T-cell (primary cell): ENCODE measurements at regions of chr7 and their contacts with region 1.

Region 1: GRCh38 chr7:69192134-69192533 is 406.1 kb upstream of the AUTS2 start:
- DNase-seq: no peak
- ATAC-seq: no peak
- H3K4me3 ChIP-seq: no peak overlapping the region
- H3K4me3 Mint-ChIP-seq: no peak overlapping the region
- H3K27ac ChIP-seq: no peak overlapping the region
- H3K27ac Mint-ChIP-seq: no peak overlapping the region
- H3K4me1 ChIP-seq: no peaks in the 10 kb centered on the region
- H3K4me1 Mint-ChIP-seq: peaks cover 0 to 12% (median 0%) of the 10 kb centered on the region in 3 donors
- H3K27me3 ChIP-seq: no peaks in the 10 kb centered on the region
- H3K27me3 Mint-ChIP-seq: no peaks in the 10 kb centered on the region

Region 2: DNA sequence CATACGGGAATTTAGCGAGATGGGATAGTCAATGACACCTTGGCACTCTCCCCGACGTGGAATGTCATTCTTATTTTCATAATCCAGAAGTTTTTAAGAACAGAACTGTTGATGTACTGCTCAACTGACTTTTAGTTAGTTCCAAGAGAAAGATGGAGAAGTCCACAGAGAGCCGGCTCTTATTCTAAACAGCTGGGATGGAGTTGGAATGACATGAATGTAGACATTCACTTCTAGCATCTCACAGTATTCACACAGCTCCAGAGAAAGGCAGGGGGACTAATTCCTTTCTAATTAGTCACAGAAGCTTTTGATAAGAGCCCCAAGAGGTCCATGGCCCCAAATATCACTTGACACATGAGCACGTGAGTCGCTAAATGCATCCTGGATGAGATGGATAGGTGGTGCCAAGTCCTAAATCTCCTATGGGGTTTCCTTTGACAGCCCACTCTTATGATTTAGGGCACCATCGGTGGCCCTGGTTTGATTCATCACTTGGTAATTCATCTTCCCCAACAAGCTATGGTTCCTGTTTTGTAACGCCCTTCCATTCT is 14.1 kb before region 1 on chr7:
- CTCF ChIA-PET with region 1: interaction called in 1 of 2 experiments, 3 read pairs
- POLR2A ChIA-PET with region 1: interaction called in 1 of 2 experiments, 10 read pairs
- DNase-seq: no peak
- ATAC-seq: no peak
- H3K4me3 ChIP-seq: no peak overlapping the region
- H3K4me3 Mint-ChIP-seq: no peak overlapping the region
- H3K27ac ChIP-seq: no peak overlapping the region
- H3K27ac Mint-ChIP-seq: no peak overlapping the region
- H3K4me1 ChIP-seq: peaks cover 0 to 5% of the 10 kb centered on the region in 2 experiments
- H3K4me1 Mint-ChIP-seq: peaks cover 6 to 15% (median 9%) of the 10 kb centered on the region in 3 donors
- H3K27me3 ChIP-seq: no peaks in the 10 kb centered on the region
- H3K27me3 Mint-ChIP-seq: no peaks in the 10 kb centered on the region

Region 3: DNA sequence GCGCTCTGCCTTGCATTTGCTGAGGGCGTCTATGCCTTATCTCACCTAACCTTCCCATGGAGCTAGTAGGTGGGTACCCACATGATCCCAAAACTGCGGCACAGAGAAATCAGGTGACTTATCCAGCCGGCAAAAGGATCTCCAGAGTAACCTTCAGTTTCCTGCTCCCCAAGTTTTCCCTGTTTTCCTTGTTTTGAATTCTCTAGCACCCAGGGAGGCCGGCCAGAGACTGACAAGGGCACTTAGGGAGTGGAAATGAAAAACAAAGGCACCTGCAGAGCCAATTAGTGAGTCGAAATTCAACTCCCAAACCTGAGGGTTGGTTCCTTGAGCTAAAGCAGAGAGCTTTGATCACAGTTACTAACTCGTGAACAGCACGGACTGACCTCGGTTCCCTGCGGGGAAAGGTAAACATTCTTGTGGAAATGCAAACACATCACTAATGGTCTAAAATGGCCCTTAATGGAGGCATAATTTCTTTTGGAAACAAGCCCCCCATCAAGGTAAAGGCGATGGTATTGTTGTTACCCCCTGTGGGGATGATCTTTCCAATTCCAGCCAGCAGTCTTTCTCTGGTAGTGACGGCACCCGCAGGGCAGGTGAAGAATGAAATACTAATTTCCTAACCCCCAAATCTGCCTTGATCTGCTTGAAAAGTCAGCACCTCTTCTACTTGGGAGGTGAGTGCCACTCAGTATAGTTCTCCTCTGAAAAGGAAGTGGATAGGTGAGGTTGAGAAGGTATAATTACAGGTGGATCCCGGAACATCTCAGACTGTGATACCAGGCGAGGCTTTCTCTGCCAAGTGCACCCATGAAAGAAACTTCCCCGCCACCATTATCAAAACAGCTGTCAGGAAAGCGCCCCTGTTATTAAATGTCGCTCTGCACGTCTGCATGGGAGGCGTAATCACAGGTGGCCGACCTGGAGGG is 40.6 kb after region 1 on chr7:
- CTCF ChIA-PET with region 1: no interaction called
- POLR2A ChIA-PET with region 1: interaction called in 1 of 2 experiments, 11 read pairs
- DNase-seq: no peak
- ATAC-seq: no peak
- H3K4me3 ChIP-seq: no peak overlapping the region
- H3K4me3 Mint-ChIP-seq: no peak overlapping the region
- H3K27ac ChIP-seq: no peak overlapping the region
- H3K27ac Mint-ChIP-seq: no peak overlapping the region
- H3K4me1 ChIP-seq: no peaks in the 10 kb centered on the region
- H3K4me1 Mint-ChIP-seq: no peaks in the 10 kb centered on the region
- H3K27me3 ChIP-seq: no peaks in the 10 kb centered on the region
- H3K27me3 Mint-ChIP-seq: no peaks in the 10 kb centered on the region

Region 4: GRCh38 chr7:69403169-69403568 is 211.0 kb after region 1 on chr7:
- CTCF ChIA-PET with region 1: no interaction called
- POLR2A ChIA-PET with region 1: no interaction called
- DNase-seq: no peak
- ATAC-seq: no peak
- H3K4me3 ChIP-seq: no peak overlapping the region
- H3K4me3 Mint-ChIP-seq: no peak overlapping the region
- H3K27ac ChIP-seq: no peak overlapping the region
- H3K27ac Mint-ChIP-seq: no peak overlapping the region
- H3K4me1 ChIP-seq: no peaks in the 10 kb centered on the region
- H3K4me1 Mint-ChIP-seq: no peaks in the 10 kb centered on the region
- H3K27me3 ChIP-seq: no peaks in the 10 kb centered on the region
- H3K27me3 Mint-ChIP-seq: peaks cover 0 to 2% of the 10 kb centered on the region in 2 donors